Mammary epithelial cell (primary cell): ENCODE measurements at regions of chr7 and their contacts with region 1.

Region 1: DNA sequence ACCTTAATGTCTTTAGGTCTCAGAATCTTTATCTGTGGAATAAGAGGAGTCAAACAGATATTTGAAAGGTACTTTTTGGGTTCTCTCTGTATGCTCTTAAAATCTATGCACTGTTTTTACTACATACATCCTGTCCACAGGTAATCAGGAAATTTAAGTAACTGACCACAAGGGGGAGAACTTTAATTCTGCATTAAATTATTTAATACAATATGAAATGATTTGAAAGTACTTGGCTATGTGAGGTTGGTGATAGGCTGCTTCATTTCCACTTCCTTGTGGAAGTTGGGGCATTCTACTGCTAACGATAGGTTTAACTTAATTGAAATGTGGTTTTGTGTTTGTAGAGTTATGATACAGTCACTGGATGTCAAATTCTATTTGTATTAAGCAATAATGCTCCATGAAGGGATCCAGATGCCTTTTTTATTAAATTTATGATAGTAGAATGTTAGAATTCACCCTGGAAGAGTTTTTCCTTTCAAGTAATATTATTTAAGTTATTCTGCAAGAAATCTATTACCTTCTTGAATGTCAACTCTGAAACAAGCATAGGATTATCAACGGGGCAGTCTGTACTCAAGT is 6.0 kb downstream of the TEX47 start:
- DNase-seq: peak; percentile 11
- H3K4me3 ChIP-seq: no peak overlapping the region
- H3K27ac ChIP-seq: no peak overlapping the region
- H3K4me1 ChIP-seq: no peaks in the 10 kb centered on the region
- H3K27me3 ChIP-seq: no peaks in the 10 kb centered on the region
- CTCF ChIP-seq: peak; percentile 48 to 57

Region 2: GRCh38 chr7:88759230-88760135 is 30.1 kb before region 1 on chr7 and contains the start of gene ZNF804B:
- CTCF ChIA-PET with region 1: no interaction called
- dilution Hi-C with region 1: no loop called
- in situ Hi-C with region 1: no loop called
- intact Hi-C with region 1: no loop called
- DNase-seq: no peak
- H3K4me3 ChIP-seq: no peak within 1 kb of the TSS
- H3K27ac ChIP-seq: no peak within 1 kb of the TSS
- H3K4me1 ChIP-seq: no peaks in the 10 kb centered on the region
- H3K27me3 ChIP-seq: peaks cover 27% of the 10 kb centered on the region
- CTCF ChIP-seq: no peak
- total RNA-seq, gene ZNF804B: not detected

Region 3: DNA sequence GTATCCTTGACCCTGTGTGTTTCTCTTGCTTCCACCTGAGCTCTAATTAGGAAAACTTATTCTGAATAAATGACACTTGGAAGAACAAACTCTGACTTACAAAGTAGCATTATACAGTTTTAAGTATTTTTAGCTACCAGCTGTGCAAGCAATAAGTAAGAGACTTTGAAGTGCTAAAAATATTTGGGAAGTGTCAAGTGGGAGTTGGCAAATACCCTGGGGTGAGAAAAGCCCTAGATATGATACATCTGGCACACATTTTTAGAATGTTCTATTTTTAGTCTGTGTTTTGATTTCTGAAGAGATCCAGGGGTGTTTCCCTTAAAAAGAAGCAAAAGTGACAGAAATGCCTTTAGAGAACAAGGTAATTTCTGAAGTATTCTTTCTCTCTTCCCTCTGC is 138.7 kb after region 1 on chr7:
- CTCF ChIA-PET with region 1: no interaction called
- dilution Hi-C with region 1: no loop called
- in situ Hi-C with region 1: no loop called
- intact Hi-C with region 1: no loop called
- DNase-seq: no peak
- H3K4me3 ChIP-seq: no peak overlapping the region
- H3K27ac ChIP-seq: no peak overlapping the region
- H3K4me1 ChIP-seq: no peaks in the 10 kb centered on the region
- H3K27me3 ChIP-seq: no peaks in the 10 kb centered on the region
- CTCF ChIP-seq: no peak

Region 4: DNA sequence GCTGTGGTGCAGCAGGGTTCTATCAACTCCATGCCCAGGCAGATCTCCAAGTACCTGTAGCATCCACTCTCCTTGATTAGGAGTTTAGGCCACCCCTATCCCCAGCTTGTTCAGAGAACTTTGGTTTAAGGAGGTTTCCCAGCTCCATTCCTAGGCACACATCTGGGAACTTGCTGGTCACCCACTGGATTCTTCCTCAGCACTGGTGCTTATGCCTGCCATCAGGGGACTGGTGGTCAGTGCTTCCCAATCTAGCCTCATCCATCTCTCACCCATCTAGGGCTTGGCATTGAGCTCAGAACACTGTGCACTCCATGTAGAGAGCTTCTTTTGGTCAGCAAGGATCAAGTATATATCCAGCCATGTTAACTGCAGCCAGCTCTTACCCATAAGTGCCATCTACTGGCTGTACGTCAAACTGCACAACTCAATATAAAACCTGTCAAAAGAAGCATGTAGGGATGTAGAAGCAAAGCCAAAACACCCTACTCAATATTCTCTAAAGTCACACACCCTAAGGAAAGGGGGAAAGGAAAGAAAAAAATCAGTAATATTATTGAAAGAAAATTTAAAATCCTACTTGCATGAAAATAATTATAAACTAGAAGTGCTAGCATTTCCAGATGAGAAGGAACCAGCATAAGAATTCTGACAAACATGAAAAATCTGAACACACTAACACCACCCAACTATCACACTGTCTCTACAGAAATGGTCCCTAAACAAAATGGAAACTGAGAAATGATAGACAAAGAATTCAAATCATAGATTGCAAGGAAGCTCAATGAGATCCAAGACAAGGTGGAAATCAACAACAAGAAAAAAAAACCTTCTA is 833.5 kb after region 1 on chr7:
- CTCF ChIA-PET with region 1: no interaction called
- dilution Hi-C with region 1: no loop called
- in situ Hi-C with region 1: no loop called
- intact Hi-C with region 1: loop called (anchors 5 kb)
- DNase-seq: peak; percentile 35
- H3K4me3 ChIP-seq: no peak overlapping the region
- H3K27ac ChIP-seq: no peak overlapping the region
- H3K4me1 ChIP-seq: no peaks in the 10 kb centered on the region
- H3K27me3 ChIP-seq: no peaks in the 10 kb centered on the region
- CTCF ChIP-seq: peak; percentile 73 to 82

Region 5: DNA sequence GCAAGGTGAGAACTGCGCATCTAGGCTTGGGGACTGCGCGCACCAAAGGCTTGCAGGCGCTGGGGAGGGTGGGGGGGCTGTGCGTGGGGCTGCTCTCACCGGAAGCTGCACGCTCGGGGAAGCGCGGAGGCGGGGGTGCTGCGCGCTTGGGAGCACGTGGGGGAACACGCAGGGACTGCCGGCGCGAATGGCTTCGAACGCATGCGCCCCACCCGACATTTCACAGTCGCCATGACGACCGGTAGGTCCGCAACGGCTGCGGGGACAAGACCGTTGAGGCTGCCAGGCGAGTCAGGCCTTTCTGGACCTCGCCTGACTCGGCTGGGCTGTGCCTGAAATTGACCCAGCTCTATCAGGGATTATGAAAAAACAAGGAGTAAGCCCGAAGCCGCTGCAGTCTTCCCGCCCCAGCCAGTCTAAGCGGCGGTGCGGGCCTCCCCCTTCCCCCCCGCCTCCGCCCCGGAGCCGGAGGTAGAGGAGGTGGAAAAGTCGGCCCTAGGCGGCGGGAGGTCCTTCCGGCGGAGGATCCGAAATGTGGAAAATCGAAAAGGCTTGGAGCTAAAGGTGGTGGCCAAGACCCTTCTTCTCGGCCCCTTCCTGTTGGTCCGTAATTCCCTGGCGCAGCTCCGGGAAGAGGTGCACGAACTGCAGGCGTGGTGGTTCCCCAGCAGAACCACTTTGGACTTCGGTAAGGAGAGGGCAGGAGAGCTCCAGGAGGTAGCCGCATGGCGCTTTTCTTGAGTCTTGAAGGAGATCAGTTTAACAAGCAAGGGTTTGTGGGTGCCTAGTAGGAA is 1329.8 kb after region 1 on chr7:
- CTCF ChIA-PET with region 1: no interaction called
- dilution Hi-C with region 1: no loop called
- in situ Hi-C with region 1: loop called in 1 of 2 experiments (anchors 25 kb)
- intact Hi-C with region 1: no loop called
- DNase-seq: peak; percentile 10
- H3K4me3 ChIP-seq: peak overlapping the region in 2 of 3 experiments; percentile 4 to 35
- H3K27ac ChIP-seq: no peak overlapping the region
- H3K4me1 ChIP-seq: peaks cover 4% of the 10 kb centered on the region
- H3K27me3 ChIP-seq: peaks cover 7% of the 10 kb centered on the region
- CTCF ChIP-seq: no peak